ENCODE measurements at regions of chr12 and their contacts with region 1.

Region 1: DNA sequence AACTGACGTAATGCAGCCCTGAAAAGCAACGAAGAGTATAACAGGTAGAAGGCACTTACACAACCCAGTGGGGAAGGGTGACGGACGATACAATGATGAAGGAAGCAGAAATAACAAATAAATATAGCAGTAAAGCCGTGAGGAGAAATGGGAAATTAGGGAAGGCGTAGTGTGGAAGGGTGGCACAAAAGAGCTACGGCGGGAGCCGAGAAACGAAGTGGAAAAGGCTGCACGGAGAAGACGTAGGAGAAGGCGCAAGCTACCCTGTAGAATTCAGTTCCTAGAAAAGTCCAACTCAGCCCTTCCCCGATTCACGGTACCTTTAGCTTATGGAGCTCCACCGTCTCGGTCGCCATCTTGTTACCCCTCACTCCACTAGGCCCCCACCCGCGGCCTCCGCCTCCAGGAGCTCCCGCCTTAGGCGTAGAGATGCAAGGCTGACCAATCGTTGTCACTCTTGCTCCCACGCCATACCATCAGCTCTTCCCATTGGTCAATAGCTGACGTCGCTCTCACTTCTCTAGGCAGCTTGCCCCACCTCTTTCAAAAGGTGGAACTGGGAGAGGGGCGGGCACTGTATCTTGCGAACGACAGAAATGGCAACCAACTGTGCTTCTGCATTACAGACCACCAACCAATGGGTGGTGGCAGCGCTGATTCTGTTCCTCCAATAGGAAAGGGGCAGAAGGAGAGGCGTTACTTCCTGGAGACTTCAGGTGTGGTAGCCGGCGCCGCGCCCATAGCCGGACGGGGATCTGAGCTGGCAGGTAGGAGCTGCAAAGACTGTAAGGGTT is at the starts of genes ORMDL2 and SARNP:
- DNase-seq: peak; percentile 100
- ATAC-seq: peak; percentile 98
- H3K4me3 ChIP-seq: peak within 1 kb of the TSS; percentile 85
- H3K27ac ChIP-seq: peak within 1 kb of the TSS; percentile 92
- H3K4me1 ChIP-seq: peaks cover 10% of the 10 kb centered on the region; the same call in 1 of the 2 replicates
- H3K27me3 ChIP-seq: no peaks in the 10 kb centered on the region
- CTCF ChIP-seq: no peak
- EP300 ChIP-seq: no peak
- POLR2A ChIP-seq: peak; percentile 86
- RAD21 ChIP-seq: no peak
- polyA plus RNA-seq, gene ORMDL2: 123 to 135 TPM
- polyA plus RNA-seq, gene SARNP: 419 to 445 TPM

Region 2: DNA sequence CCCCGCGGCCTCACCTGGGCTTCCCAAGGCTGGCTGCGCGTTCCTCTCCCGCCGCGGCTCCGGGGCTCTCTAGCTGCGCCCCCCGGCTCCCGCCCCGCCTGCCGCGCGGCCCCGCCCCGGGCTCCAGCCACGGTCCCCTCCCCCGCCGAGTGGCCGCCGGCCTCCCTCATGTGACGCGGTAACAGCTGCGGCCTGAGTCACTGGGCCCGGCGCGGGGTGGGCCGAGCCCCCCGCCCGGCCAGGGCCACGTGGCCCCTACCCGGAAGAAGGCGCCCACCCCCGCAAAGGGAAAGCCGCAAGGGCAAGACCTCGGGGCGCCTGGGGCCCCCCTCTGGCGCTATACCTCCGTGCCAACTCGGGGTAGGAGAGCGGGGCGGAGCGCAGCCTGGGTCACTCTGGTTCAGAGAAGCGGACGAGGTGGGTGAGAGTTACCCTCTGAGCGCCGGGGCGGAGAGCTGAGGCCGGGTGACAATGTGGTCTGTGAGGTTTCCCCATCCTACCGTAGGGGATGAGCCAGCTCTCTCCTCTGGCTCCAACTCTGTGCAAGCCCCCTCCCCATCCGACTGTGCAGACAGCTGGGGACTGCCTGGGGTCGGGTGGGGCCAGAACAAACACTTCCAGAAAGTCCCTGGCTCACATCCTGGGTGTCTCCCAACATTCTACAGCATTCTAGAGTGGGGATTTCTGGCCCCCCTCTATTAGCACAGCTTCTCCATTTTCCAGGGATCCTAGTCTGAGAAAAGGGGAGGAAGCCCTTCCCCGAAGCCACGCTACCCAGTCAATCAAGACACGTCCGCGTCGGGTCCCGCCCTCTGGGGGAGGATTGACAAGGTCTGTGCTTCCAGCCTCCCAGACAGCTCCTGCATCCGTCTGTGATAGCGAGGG is 88.4 kb before region 1 on chr12 and contains the start of gene CD63:
- CTCF ChIA-PET with region 1: interaction called, 6 read pairs
- POLR2A ChIA-PET with region 1: interaction called, 12 read pairs
- RAD21 ChIA-PET with region 1: interaction called, 9 read pairs
- SMC1A ChIA-PET with region 1: interaction called, 3 read pairs
- in situ Hi-C with region 1: no loop called
- intact Hi-C with region 1: no loop called
- DNase-seq: no peak
- ATAC-seq: peak; percentile 79
- H3K4me3 ChIP-seq: peak within 1 kb of the TSS; percentile 76
- H3K27ac ChIP-seq: peak within 1 kb of the TSS; percentile 68
- H3K4me1 ChIP-seq: peaks cover 11% of the 10 kb centered on the region
- H3K27me3 ChIP-seq: no peaks in the 10 kb centered on the region
- CTCF ChIP-seq: no peak; a peak in 1 of 6 replicates
- EP300 ChIP-seq: peak in 1 of 2 experiments; percentile 46; a peak in 1 of 4 replicates
- POLR2A ChIP-seq: peak; percentile 77
- RAD21 ChIP-seq: no peak
- polyA plus RNA-seq, gene CD63: 194 to 220 TPM

Region 3: DNA sequence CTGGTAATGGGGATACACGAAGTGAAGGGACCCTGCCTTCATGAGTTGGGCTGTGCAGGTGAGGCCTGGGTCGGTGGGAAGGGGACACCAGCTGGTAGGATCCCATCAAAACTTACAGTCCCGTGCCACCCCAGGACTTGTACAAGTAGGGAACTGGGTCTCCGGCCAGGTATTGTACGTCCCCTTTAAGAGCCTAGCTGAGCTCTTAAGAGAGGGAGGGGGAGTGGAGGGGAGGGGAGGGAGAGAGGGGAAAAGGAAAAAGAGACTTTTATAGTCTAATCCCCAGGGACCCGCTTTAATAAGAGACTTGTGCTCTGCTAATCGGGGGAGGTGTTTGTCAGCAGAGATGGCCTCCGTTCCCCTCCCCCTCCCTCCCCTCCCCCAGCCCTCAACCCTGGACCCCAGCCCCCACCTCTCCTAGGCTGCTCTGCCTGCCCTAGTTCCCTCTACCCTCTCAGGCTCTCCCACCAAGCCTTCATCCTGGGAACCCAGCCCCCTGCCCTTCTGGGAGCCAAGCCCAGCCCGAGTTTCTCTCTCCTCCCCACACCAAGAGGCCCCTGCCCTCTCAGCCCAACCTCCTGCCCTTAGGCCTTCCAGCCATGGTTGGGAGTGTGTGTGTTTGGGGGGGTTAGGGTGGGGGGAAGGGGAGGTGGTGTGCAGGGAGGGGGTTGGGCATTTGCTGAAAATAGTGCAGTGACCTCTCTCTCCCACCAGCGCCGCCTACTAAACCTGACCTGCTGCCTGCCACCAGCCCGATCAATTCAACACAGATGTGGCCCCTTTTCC is 72.0 kb before region 1 on chr12:
- CTCF ChIA-PET with region 1: interaction called, 14 read pairs
- POLR2A ChIA-PET with region 1: interaction called, 38 read pairs
- RAD21 ChIA-PET with region 1: interaction called, 12 read pairs
- SMC1A ChIA-PET with region 1: interaction called, 21 read pairs
- in situ Hi-C with region 1: no loop called
- intact Hi-C with region 1: no loop called
- DNase-seq: no peak
- ATAC-seq: peak; percentile 11
- H3K4me3 ChIP-seq: peak overlapping the region; percentile 79
- H3K27ac ChIP-seq: no peak overlapping the region
- H3K4me1 ChIP-seq: peaks cover 5% of the 10 kb centered on the region
- H3K27me3 ChIP-seq: no peaks in the 10 kb centered on the region
- CTCF ChIP-seq: no peak
- EP300 ChIP-seq: no peak
- POLR2A ChIP-seq: no peak
- RAD21 ChIP-seq: no peak

Region 4: DNA sequence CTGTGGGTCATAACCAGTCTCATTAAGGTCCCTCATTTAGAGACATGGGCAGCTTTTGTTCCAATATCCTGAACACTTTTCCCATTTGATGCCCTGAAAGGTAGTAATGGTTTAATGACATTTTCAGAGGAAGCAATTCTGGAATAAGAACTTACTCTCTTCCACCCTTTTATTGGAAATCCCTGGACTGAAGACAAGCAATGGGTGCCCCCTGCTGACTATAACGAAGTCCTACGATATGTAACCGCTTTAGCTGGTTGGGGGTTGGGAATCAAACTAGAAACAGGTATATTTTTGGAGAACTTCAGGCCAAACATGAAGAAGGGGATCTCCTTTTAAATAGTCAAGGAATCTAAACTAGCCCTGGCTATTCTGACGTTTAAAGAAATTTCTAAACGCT is 20.5 kb before region 1 on chr12:
- CTCF ChIA-PET with region 1: interaction called, 11 read pairs
- POLR2A ChIA-PET with region 1: no interaction called
- RAD21 ChIA-PET with region 1: interaction called, 5 read pairs
- SMC1A ChIA-PET with region 1: interaction called, 12 read pairs
- in situ Hi-C with region 1: no loop called
- intact Hi-C with region 1: no loop called
- DNase-seq: no peak
- ATAC-seq: no peak
- H3K4me3 ChIP-seq: no peak overlapping the region
- H3K27ac ChIP-seq: no peak overlapping the region
- H3K4me1 ChIP-seq: no peaks in the 10 kb centered on the region
- H3K27me3 ChIP-seq: no peaks in the 10 kb centered on the region
- CTCF ChIP-seq: peak; percentile 14 to 36 (median 19); a peak in 3 of 6 replicates
- EP300 ChIP-seq: no peak
- POLR2A ChIP-seq: no peak
- RAD21 ChIP-seq: peak; percentile 47

Region 5: GRCh38 chr12:55829967-55830600 is 12.5 kb after region 1 on chr12:
- CTCF ChIA-PET with region 1: interaction called, 89 read pairs
- POLR2A ChIA-PET with region 1: interaction called, 103 read pairs
- RAD21 ChIA-PET with region 1: interaction called, 35 read pairs
- SMC1A ChIA-PET with region 1: interaction called, 41 read pairs
- in situ Hi-C with region 1: no loop called
- intact Hi-C with region 1: no loop called
- DNase-seq: no peak
- ATAC-seq: peak; percentile 25
- H3K4me3 ChIP-seq: peak overlapping the region; percentile 96
- H3K27ac ChIP-seq: peak overlapping the region; percentile 76
- H3K4me1 ChIP-seq: peaks cover 21% of the 10 kb centered on the region; the same call in 1 of the 2 replicates
- H3K27me3 ChIP-seq: no peaks in the 10 kb centered on the region
- CTCF ChIP-seq: no peak
- EP300 ChIP-seq: no peak
- POLR2A ChIP-seq: 0 out of 2 replicates have a peak, but pooled peaks have one; percentile 20
- RAD21 ChIP-seq: 0 out of 2 replicates have a peak, but pooled peaks have one; percentile 13

Region 6: GRCh38 chr12:55931780-55932550 is 114.4 kb after region 1 on chr12:
- CTCF ChIA-PET with region 1: interaction called, 5 read pairs
- POLR2A ChIA-PET with region 1: interaction called, 19 read pairs
- RAD21 ChIA-PET with region 1: interaction called, 14 read pairs
- SMC1A ChIA-PET with region 1: interaction called, 15 read pairs
- in situ Hi-C with region 1: no loop called
- intact Hi-C with region 1: loop called (anchors 2 kb)
- DNase-seq: no peak
- ATAC-seq: peak; percentile 28
- H3K4me3 ChIP-seq: peak overlapping the region; percentile 99
- H3K27ac ChIP-seq: peak overlapping the region; percentile 83
- H3K4me1 ChIP-seq: peaks cover 8% of the 10 kb centered on the region; the same call in 1 of the 2 replicates
- H3K27me3 ChIP-seq: no peaks in the 10 kb centered on the region
- CTCF ChIP-seq: no peak
- EP300 ChIP-seq: no peak
- POLR2A ChIP-seq: peak; percentile 45
- RAD21 ChIP-seq: no peak

Region 7: DNA sequence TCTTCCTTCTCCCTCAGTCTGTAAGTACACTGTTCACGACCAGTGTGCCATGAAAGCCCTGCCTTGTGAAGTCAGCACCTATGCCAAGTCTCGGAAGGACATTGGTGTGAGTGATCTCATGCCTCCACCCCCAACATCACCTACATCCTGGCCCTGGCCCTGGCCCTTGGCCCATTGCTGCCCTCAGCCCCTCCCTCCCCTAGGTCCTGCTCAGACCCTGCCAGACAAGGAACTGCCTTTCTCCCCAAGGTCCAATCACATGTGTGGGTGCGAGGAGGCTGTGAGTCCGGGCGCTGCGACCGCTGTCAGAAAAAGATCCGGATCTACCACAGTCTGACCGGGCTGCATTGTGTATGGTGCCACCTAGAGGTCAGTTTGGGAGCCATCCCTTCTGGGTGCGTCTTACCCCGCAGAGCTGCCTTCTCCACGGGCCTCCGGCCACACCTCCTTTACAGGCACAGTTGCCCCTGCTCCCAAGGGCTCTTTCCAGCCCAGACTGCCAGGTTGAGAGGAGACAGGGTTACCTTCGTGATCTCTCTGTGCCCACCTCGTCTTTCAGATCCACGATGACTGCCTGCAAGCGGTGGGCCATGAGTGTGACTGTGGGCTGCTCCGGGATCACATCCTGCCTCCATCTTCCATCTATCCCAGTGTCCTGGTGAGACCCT is 122.7 kb after region 1 on chr12:
- CTCF ChIA-PET with region 1: interaction called, 49 read pairs
- POLR2A ChIA-PET with region 1: interaction called, 3 read pairs
- RAD21 ChIA-PET with region 1: interaction called, 10 read pairs
- SMC1A ChIA-PET with region 1: interaction called, 8 read pairs
- in situ Hi-C with region 1: no loop called
- intact Hi-C with region 1: no loop called
- DNase-seq: peak; percentile 60
- ATAC-seq: peak; percentile 100
- H3K4me3 ChIP-seq: no peak overlapping the region
- H3K27ac ChIP-seq: no peak overlapping the region
- H3K4me1 ChIP-seq: peaks cover 10% of the 10 kb centered on the region
- H3K27me3 ChIP-seq: no peaks in the 10 kb centered on the region
- CTCF ChIP-seq: peak; percentile 91 to 95 (median 94); a peak in 5 of 6 replicates
- EP300 ChIP-seq: no peak
- POLR2A ChIP-seq: no peak
- RAD21 ChIP-seq: peak; percentile 82

Region 8: GRCh38 chr12:56286044-56286830 is 468.7 kb after region 1 on chr12:
- CTCF ChIA-PET with region 1: no interaction called
- POLR2A ChIA-PET with region 1: no interaction called
- RAD21 ChIA-PET with region 1: no interaction called
- SMC1A ChIA-PET with region 1: no interaction called
- in situ Hi-C with region 1: no loop called
- intact Hi-C with region 1: no loop called
- DNase-seq: no peak
- ATAC-seq: no peak
- H3K4me3 ChIP-seq: no peak overlapping the region
- H3K27ac ChIP-seq: no peak overlapping the region
- H3K4me1 ChIP-seq: no peaks in the 10 kb centered on the region
- H3K27me3 ChIP-seq: no peaks in the 10 kb centered on the region
- CTCF ChIP-seq: no peak
- EP300 ChIP-seq: no peak
- POLR2A ChIP-seq: no peak
- RAD21 ChIP-seq: no peak

Region 9: DNA sequence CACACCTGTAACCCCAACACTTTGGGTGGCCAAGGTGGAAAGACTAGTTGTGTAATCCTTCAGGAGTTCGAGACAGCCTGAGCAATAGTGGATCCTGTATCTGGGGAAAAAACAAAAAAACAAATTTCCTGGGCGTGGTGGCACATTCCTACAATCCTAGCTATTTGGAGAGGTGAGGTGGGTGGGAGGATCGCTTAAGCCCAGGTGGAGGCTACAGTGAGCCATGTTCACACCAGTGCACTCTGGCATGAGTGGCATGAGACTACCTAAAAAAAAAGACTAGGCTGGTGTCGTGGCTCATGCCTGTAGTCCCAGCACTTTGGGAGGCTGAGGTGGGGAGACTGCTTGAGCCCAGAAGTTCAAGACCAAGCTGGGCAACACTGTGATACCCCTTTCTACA is 853.3 kb after region 1 on chr12:
- CTCF ChIA-PET with region 1: no interaction called
- POLR2A ChIA-PET with region 1: no interaction called
- RAD21 ChIA-PET with region 1: no interaction called
- SMC1A ChIA-PET with region 1: no interaction called
- in situ Hi-C with region 1: no loop called
- intact Hi-C with region 1: no loop called
- DNase-seq: no peak
- ATAC-seq: no peak
- H3K4me3 ChIP-seq: no peak overlapping the region
- H3K27ac ChIP-seq: no peak overlapping the region
- H3K4me1 ChIP-seq: no peaks in the 10 kb centered on the region
- H3K27me3 ChIP-seq: no peaks in the 10 kb centered on the region
- CTCF ChIP-seq: no peak
- EP300 ChIP-seq: no peak
- POLR2A ChIP-seq: no peak
- RAD21 ChIP-seq: no peak

Measured in GM12878 (cell line).